ENCODE measurements at regions of chr11 and their contacts with region 1.

Region 1: GRCh38 chr11:1943977-1944376 is 3.2 kb upstream of the MRPL23 start:
- DNase-seq: peak in 1 of 2 donors; percentile 1
- ATAC-seq: no peak
- H3K4me3 ChIP-seq: no peak overlapping the region
- H3K27ac ChIP-seq: peak overlapping the region in 3 of 4 donors; percentile 20 to 37 (median 31)
- H3K4me1 ChIP-seq: no peaks in the 10 kb centered on the region
- H3K27me3 ChIP-seq: no peaks in the 10 kb centered on the region
- CTCF ChIP-seq: no peak
- POLR2A ChIP-seq: no peak

Region 2: GRCh38 chr11:1863352-1864216 is 80.4 kb before region 1 on chr11:
- in situ Hi-C with region 1: no loop called
- intact Hi-C with region 1: no loop called
- DNase-seq: peak; percentile 64 to 71
- ATAC-seq: peak; percentile 79 to 80
- H3K4me3 ChIP-seq: peak overlapping the region; percentile 26 to 42 (median 37)
- H3K27ac ChIP-seq: peak overlapping the region; percentile 64 to 83 (median 76)
- H3K4me1 ChIP-seq: peaks cover 26 to 32% of the 10 kb centered on the region in 2 donors
- H3K27me3 ChIP-seq: peaks cover 0 to 9% (median 6%) of the 10 kb centered on the region in 3 donors
- CTCF ChIP-seq: no peak
- POLR2A ChIP-seq: peak; percentile 20 to 36

Region 3: GRCh38 chr11:1893581-1894359 is 50.2 kb before region 1 on chr11:
- in situ Hi-C with region 1: no loop called
- intact Hi-C with region 1: loop called (anchors 1 kb)
- DNase-seq: no peak
- ATAC-seq: no peak
- H3K4me3 ChIP-seq: no peak overlapping the region
- H3K27ac ChIP-seq: peak overlapping the region in 1 of 4 donors; percentile 84
- H3K4me1 ChIP-seq: peaks cover 16 to 35% of the 10 kb centered on the region in 2 donors
- H3K27me3 ChIP-seq: no peaks in the 10 kb centered on the region
- CTCF ChIP-seq: no peak
- POLR2A ChIP-seq: no peak

Region 4: GRCh38 chr11:1912289-1912878 is 31.6 kb before region 1 on chr11:
- in situ Hi-C with region 1: no loop called
- intact Hi-C with region 1: loop called (anchors 1 kb)
- DNase-seq: peak in 1 of 2 donors; percentile 28
- ATAC-seq: peak in 1 of 2 donors; percentile 22
- H3K4me3 ChIP-seq: no peak overlapping the region
- H3K27ac ChIP-seq: peak overlapping the region; percentile 55 to 76 (median 62)
- H3K4me1 ChIP-seq: peaks cover 13 to 20% of the 10 kb centered on the region in 2 donors
- H3K27me3 ChIP-seq: no peaks in the 10 kb centered on the region
- CTCF ChIP-seq: no peak
- POLR2A ChIP-seq: peak in 1 of 2 donors; percentile 19

Measured in gastrocnemius medialis (tissue), 4 donors.